ENCODE measurements at regions of chr15 and their contacts with region 1.

Region 1: GRCh38 chr15:45198337-45199135 is 10.8 kb upstream of the SHF start:
- DNase-seq: peak; percentile 98
- ATAC-seq: peak; percentile 69
- H3K4me3 ChIP-seq: peak overlapping the region; percentile 86 to 100
- H3K27ac ChIP-seq: peak overlapping the region; percentile 77
- H3K4me1 ChIP-seq: peaks cover 6% of the 10 kb centered on the region
- H3K27me3 ChIP-seq: no peaks in the 10 kb centered on the region
- CTCF ChIP-seq: peak; percentile 96

Region 2: DNA sequence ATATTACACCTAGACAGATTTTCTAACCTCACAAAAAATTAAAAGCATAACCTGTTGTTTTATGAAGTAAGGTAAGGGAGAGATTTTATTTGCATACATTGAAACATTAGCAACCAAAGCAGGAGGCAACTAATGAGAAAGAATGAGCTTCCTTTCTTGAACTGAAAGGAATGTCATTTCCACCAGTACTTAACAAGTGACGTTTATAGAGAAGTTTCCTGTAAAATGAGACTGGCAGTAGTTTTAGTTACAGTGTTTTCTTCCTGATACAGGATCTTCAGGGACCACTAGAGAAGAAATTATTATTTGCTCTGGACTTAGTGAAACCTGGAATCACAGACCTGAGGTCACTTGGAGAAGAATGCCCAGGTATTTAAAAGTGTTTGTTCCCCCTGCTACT is 976.1 kb before region 1 on chr15:
- CTCF ChIA-PET with region 1: no interaction called
- POLR2A ChIA-PET with region 1: no interaction called
- in situ Hi-C with region 1: no loop called
- intact Hi-C with region 1: no loop called
- DNase-seq: no peak
- ATAC-seq: no peak
- H3K4me3 ChIP-seq: no peak overlapping the region
- H3K27ac ChIP-seq: no peak overlapping the region
- H3K4me1 ChIP-seq: no peaks in the 10 kb centered on the region
- H3K27me3 ChIP-seq: no peaks in the 10 kb centered on the region
- CTCF ChIP-seq: no peak

Region 3: GRCh38 chr15:45094358-45094730 is 104.2 kb before region 1 on chr15:
- CTCF ChIA-PET with region 1: no interaction called
- POLR2A ChIA-PET with region 1: no interaction called
- in situ Hi-C with region 1: no loop called
- intact Hi-C with region 1: no loop called
- DNase-seq: no peak
- ATAC-seq: 0 out of 2 replicates have a peak, but pooled peaks have one; percentile 24
- H3K4me3 ChIP-seq: no peak overlapping the region
- H3K27ac ChIP-seq: no peak overlapping the region
- H3K4me1 ChIP-seq: no peaks in the 10 kb centered on the region
- H3K27me3 ChIP-seq: peaks cover 9% of the 10 kb centered on the region
- CTCF ChIP-seq: no peak

Region 4: GRCh38 chr15:45166834-45167630 is 31.5 kb before region 1 on chr15:
- CTCF ChIA-PET with region 1: interaction called, 13 read pairs
- POLR2A ChIA-PET with region 1: interaction called, 7 read pairs
- in situ Hi-C with region 1: no loop called
- intact Hi-C with region 1: loop called (anchors 2 kb)
- DNase-seq: peak; percentile 58
- ATAC-seq: peak; percentile 92
- H3K4me3 ChIP-seq: peak overlapping the region; percentile 67 to 68
- H3K27ac ChIP-seq: peak overlapping the region; percentile 84
- H3K4me1 ChIP-seq: peaks cover 8% of the 10 kb centered on the region
- H3K27me3 ChIP-seq: no peaks in the 10 kb centered on the region
- CTCF ChIP-seq: peak; percentile 85

Region 5: GRCh38 chr15:45279024-45279698 is 80.6 kb after region 1 on chr15:
- CTCF ChIA-PET with region 1: interaction called, 3 read pairs
- POLR2A ChIA-PET with region 1: interaction called, 14 read pairs
- in situ Hi-C with region 1: no loop called
- intact Hi-C with region 1: no loop called
- DNase-seq: peak; percentile 97
- ATAC-seq: peak; percentile 100
- H3K4me3 ChIP-seq: peak overlapping the region; percentile 82 to 97
- H3K27ac ChIP-seq: peak overlapping the region; percentile 94
- H3K4me1 ChIP-seq: peaks cover 13% of the 10 kb centered on the region
- H3K27me3 ChIP-seq: no peaks in the 10 kb centered on the region
- CTCF ChIP-seq: no peak

Region 6: GRCh38 chr15:45395943-45396342 is 197.4 kb after region 1 on chr15:
- CTCF ChIA-PET with region 1: interaction called, 13 read pairs
- POLR2A ChIA-PET with region 1: no interaction called
- in situ Hi-C with region 1: no loop called
- intact Hi-C with region 1: no loop called
- DNase-seq: no peak
- ATAC-seq: no peak
- H3K4me3 ChIP-seq: no peak overlapping the region
- H3K27ac ChIP-seq: no peak overlapping the region
- H3K4me1 ChIP-seq: 0 out of 2 replicates have a peak, but pooled peaks cover 2% of the 10 kb centered on the region
- H3K27me3 ChIP-seq: peaks cover 29% of the 10 kb centered on the region
- CTCF ChIP-seq: no peak